ENCODE measurements at regions of chr1 and their contacts with region 1.

Region 1: GRCh38 chr1:164786980-164787833 is 228.2 kb downstream of the PBX1 start:
- DNase-seq: peak; percentile 88

Region 2: GRCh38 chr1:163820766-163821165 is 966.4 kb before region 1 on chr1:
- intact Hi-C with region 1: loop called (anchors 10 kb)
- DNase-seq: no peak

Region 3: GRCh38 chr1:164440232-164440631 is 347.0 kb before region 1 on chr1:
- intact Hi-C with region 1: loop called (anchors 2 kb)
- DNase-seq: peak; percentile 76

Region 4: DNA sequence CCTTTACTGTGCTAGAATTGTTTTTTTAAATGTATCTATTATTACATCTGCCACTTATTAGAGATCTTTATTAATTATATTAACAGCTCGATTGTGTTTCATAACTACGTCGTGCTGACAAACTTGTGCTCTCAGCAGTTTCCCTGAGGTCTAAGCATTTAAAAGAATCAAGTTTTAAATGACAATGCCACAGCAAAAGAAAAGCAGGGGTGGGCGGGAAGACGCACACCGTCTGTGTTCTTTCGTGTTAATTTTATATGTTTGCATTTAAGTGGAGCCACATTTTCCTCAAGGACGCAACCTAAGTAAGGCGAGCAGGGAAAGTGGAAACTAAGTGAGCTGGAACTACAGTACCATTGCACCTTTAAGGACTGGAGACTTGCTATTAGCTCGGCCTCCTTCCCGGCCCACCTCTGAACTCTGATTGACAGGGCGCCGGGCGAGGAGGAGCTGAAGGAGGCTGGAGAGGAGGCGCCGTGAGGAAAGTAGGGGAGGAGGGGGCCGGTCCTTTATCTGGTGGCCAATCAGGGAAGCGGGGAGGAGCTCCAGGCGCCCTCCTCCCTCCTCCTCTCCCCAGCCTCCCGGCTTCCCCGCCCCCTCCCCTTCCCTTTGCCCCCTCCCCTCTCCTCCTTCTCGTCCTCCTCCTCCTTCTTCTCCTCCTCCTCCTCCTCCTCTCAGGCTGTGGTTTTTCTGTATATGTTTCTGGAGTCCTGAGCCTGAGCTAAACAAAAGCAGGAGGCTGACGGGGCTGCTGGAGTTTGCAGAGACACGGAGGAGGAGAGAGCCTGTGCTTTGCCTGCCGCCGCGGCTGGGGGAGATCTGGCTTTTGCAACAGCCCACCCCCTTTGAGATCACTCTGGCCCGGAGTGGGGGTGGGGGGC is 228.5 kb before region 1 on chr1 and contains the start of gene PBX1:
- intact Hi-C with region 1: loop called (anchors 2 kb)
- DNase-seq: peak; percentile 97
- total RNA-seq, gene PBX1: 52.2 TPM

Region 5: DNA sequence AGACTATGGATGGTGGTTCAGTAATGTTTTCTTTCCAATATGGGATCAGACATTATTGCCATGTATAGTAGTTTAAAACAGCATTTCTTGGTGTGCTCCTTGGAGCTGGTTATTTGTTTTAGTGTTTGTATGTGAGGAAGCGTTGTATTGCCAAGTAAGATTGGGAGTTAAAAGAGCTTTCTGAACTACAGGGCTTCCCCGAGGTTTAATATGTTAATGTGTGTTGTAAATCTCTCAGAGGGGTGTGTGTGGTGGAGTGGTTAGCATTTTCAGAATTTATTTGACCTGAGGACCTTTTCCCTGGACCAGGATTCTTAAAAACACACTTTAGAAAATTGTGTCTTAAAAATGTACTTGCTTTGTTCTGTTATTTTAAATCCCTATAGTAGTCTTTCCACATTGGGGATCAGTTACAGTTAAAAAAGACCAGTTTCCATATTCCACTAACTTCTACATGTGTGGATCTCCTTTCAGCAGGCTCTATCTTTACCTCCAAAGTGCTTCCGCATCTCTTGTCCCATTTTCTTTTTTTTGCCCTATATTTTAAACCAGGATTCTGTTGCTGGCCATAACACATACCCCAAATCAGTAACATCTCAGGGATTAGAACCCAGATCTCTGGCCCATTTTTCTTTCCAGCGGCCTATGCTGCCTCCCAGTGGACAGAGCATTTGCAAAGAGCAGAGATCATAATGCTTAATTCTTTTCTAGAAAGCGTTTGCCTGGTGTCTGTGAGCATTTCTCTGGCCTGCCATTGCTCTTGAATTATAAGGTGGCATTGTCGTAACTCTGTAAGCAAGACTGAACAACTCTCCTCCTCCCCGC is 169.6 kb before region 1 on chr1:
- intact Hi-C with region 1: loop called (anchors 2 kb)
- DNase-seq: no peak

Region 6: DNA sequence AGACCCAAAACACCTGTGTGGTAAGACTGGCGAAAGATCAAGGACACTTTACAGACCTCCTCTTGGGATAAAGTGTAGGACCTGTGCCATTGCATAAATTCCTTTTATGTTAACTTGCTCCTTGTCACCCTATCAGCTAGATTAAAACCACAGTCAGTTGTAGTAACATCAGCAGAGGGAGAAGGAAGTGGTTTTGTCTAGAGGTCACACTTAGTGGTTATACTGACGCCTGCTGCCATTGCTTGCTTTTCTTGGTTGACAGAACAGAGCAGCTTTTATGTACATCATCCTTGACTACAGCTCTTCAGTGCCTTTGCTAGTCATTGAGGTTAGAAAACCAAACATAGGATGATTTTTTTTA is 126.8 kb before region 1 on chr1:
- intact Hi-C with region 1: no loop called
- DNase-seq: no peak

Region 7: DNA sequence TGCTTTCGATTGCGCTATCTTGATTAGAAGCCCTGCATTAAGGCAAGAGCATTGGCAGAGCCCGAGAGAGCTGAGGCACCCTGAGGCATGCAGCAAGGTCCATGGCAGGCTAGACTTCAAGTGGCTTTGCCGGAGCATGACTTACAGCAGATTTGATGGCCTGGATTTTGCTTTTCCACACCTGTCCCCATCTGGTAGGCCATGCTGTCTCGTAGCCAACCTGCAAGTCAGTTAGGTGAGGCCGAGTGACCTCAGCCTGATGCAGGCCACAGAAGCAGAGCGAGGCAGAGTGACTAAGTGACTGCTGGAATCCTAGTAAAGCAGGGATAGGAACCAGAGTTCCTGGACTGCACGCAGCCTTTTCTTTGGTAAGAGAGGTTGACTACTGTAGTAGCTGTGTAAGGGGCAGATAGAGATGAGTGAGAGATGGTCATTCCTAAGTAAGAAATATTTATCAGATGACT is 79.3 kb before region 1 on chr1:
- intact Hi-C with region 1: loop called (anchors 2 kb)
- DNase-seq: no peak